ENCODE measurements at regions of chr7 and their contacts with region 1.

Region 1: DNA sequence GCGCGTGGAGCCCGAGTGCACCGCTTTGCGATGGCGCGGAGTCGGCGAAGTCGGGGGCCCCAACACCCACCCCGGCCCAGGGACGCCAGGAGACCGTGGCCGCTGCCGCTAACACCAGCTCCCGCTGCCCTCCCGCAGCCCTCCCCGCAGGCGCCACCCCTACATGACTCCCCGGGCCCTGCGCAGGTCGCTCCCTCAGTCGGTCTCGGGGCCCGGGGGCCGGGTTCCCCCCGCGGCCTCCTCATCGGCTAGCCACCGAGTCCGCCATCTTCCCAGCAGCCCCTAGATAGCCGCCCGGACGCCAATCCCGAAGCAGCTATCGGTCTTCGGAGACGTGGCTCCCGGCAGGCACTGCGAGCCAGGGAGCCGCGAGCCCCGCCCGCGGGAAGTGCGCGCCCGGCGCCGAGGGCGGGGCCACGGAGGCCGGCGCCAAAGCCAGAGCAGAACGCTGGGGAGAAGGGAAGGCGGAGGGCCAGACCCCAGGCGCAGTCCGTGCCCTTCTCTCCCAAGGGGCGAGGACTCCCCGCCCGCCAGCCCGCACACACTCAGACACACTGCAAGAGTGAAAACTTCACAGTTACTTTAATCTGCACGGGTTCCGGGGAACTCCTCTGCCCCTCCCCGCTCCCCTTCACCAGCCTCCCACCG is at the start of gene FASTK:
- DNase-seq: peak; percentile 88
- H3K4me3 Mint-ChIP-seq: peak within 1 kb of the TSS; percentile 95
- H3K27ac Mint-ChIP-seq: peak within 1 kb of the TSS; percentile 88
- H3K4me1 Mint-ChIP-seq: peaks cover 42% of the 10 kb centered on the region
- H3K27me3 Mint-ChIP-seq: peaks cover 10% of the 10 kb centered on the region
- total RNA-seq, gene FASTK: 92.6 and 96.3 TPM in 2 replicates

Region 2: DNA sequence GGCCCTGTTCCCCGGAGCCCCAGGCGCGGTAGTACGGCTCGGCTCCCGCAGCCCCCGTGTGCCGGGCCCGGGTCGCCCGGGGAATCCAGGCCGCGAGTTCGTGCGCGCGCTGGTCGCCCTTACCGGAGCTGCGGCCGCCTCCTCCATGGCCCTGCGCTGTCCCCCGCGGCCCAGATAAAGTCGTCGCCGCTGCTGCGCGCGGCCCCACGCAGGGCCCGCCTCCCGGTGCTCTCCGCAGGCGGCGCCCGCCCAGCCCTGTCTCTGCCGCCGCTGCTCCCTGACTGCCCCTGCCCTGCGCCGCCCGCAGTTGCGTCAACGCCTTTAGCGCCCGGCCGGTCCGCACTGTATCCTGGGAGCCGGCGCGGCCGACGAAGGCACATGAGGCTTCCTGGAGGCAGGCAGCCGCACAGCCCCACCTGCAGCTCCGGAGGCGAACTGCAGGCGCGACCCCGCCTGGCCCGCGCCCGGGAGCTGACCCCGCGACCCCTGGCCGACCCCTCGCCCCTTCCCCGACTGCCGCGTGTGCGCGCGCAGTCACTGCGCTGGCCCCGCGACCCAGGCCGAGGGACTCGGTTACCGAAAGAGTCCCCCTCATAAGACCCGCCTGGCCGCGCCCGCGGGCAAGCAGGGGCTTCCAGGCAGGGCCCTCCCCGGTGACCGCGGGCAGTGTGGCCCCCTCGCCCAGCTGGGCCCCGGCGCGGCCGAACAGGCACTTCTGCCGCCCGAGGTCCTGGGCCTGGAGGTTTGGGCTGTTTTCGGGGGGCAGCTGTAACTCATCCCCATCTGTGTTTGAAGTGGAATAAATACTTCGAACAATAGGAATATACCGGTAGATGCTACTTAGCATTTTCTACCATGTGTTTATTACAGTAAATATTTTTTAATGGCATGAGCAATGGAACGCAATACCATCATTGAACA is 1456.0 kb before region 1 on chr7:
- intact Hi-C with region 1: loop called (anchors 10 kb)
- DNase-seq: peak; percentile 91
- H3K4me3 Mint-ChIP-seq: peak overlapping the region; percentile 89
- H3K27ac Mint-ChIP-seq: peak overlapping the region; percentile 83
- H3K4me1 Mint-ChIP-seq: peaks cover 32% of the 10 kb centered on the region
- H3K27me3 Mint-ChIP-seq: peaks cover 6% of the 10 kb centered on the region

Region 3: DNA sequence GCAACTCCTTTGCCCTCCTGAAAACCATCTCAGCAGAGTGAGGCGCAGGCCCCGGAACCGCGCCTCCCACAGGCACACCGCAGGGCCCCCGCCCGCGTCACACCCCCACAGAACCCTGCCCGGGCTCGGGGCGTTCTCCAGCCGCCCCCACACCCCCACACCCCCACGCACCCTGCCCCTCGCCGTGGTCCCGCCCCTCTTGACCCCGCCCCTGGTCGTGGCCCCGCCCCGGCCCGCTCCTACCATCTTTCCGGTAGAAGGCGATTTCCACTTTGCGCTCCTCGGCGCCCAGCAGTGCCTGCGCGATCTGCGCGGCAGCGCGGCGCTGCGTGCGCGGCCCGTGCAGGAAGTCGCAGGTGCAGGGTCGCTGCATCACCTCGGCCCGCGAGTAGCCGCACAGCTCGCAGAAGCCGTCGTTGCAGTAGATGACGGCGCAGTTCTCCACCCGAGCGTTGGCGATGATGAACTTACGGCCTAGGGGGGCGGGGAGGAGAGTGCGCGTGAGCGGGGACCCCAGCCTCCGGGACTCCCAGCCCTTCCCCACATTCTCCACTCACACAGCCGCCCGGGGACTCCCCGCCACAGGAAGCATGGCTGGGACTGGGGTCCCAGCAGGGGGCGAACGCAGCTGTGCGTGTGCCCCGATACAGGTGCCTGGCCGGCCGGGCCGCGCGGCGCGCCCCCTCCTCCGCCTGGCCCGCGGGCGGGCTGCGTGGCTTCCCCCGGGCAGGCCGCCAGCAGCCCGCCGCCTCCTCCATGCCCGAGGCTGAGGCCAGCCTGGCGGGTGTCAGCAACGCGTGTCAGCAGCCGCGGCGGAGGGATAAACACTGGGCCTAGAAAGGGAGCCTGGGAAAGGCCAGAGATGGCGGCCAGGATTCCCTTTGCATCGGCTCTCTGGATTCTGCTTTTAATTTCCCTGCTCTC is 105.9 kb before region 1 on chr7:
- intact Hi-C with region 1: loop called (anchors 1 kb)
- DNase-seq: peak; percentile 73
- H3K4me3 Mint-ChIP-seq: peak overlapping the region; percentile 83
- H3K27ac Mint-ChIP-seq: peak overlapping the region; percentile 58
- H3K4me1 Mint-ChIP-seq: peaks cover 29% of the 10 kb centered on the region
- H3K27me3 Mint-ChIP-seq: peaks cover 25% of the 10 kb centered on the region

Region 4: GRCh38 chr7:151028131-151028947 is 52.3 kb before region 1 on chr7 and contains the start of gene ABCB8:
- intact Hi-C with region 1: loop called (anchors 1 kb)
- DNase-seq: peak; percentile 98
- H3K4me3 Mint-ChIP-seq: peak within 1 kb of the TSS; percentile 94
- H3K27ac Mint-ChIP-seq: peak within 1 kb of the TSS; percentile 95
- H3K4me1 Mint-ChIP-seq: peaks cover 21% of the 10 kb centered on the region
- H3K27me3 Mint-ChIP-seq: peaks cover 2% of the 10 kb centered on the region
- total RNA-seq, gene ABCB8: 56.9 and 57.9 TPM in 2 replicates

Region 5: DNA sequence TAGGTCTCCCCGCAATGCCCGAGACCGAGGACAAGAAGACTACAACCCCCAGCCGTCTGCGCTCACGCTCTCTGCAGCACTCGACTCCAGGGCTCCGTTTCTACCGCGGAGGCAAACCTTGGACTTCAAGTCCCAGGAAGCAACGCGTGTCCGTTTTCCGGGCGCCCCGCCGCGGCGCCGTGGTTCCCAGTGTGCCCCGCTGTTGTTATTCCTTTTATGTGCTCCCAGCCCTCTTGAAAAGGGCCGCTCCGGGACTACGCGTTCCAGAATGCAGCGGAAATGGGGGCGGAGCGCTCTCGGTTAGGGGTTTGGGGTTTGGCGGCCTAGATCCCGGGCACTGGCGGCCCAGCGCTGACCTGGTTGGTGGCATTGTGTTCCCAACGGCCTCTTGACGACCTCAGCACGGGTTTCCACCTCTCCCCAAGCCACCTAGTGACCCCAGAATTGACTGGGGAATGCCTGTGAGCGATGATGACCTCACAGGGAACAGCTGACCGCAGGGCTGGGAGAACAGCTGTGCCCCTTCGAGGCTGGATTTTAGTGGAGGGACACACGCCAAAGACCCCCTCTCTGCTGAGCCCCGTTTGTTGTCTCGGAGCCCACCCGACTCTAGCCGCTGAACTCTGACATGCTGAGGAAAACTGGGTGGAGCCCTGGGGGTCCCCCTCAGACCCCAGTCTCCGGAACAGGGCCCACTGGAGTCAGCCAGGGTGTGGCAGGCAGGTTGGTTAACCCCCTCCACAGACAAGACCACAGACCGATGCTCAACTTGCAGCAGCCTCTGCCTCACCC is 22.5 kb before region 1 on chr7:
- intact Hi-C with region 1: loop called (anchors 1 kb)
- DNase-seq: peak; percentile 95
- H3K4me3 Mint-ChIP-seq: peak overlapping the region; percentile 93
- H3K27ac Mint-ChIP-seq: peak overlapping the region; percentile 92
- H3K4me1 Mint-ChIP-seq: peaks cover 46% of the 10 kb centered on the region
- H3K27me3 Mint-ChIP-seq: no peaks in the 10 kb centered on the region

Region 6: GRCh38 chr7:151152643-151153513 is 72.2 kb after region 1 on chr7:
- intact Hi-C with region 1: no loop called
- DNase-seq: no peak
- H3K4me3 Mint-ChIP-seq: no peak overlapping the region
- H3K27ac Mint-ChIP-seq: no peak overlapping the region
- H3K4me1 Mint-ChIP-seq: no peaks in the 10 kb centered on the region
- H3K27me3 Mint-ChIP-seq: peaks cover 21% of the 10 kb centered on the region

Region 7: GRCh38 chr7:151232091-151232916 is 151.7 kb after region 1 on chr7 and contains the start of gene CHPF2:
- intact Hi-C with region 1: loop called (anchors 1 kb)
- DNase-seq: peak; percentile 89
- H3K4me3 Mint-ChIP-seq: peak within 1 kb of the TSS; percentile 100
- H3K27ac Mint-ChIP-seq: peak within 1 kb of the TSS; percentile 98
- H3K4me1 Mint-ChIP-seq: peaks cover 35% of the 10 kb centered on the region
- H3K27me3 Mint-ChIP-seq: peaks cover 2% of the 10 kb centered on the region
- total RNA-seq, gene CHPF2: 45.6 and 48.5 TPM in 2 replicates